Transverse colon (tissue), 4 donors: ENCODE measurements at regions of chr7 and their contacts with region 1.

Region 1: GRCh38 chr7:95963446-95963990 is 191.2 kb downstream of the DYNC1I1 start:
- DNase-seq: no peak
- H3K4me3 ChIP-seq: no peak overlapping the region
- H3K27ac ChIP-seq: no peak overlapping the region
- H3K4me1 ChIP-seq: no peaks in the 10 kb centered on the region
- H3K27me3 ChIP-seq: no peaks in the 10 kb centered on the region
- CTCF ChIP-seq: no peak
- EP300 ChIP-seq: no peak
- POLR2A ChIP-seq: no peak

Region 2: DNA sequence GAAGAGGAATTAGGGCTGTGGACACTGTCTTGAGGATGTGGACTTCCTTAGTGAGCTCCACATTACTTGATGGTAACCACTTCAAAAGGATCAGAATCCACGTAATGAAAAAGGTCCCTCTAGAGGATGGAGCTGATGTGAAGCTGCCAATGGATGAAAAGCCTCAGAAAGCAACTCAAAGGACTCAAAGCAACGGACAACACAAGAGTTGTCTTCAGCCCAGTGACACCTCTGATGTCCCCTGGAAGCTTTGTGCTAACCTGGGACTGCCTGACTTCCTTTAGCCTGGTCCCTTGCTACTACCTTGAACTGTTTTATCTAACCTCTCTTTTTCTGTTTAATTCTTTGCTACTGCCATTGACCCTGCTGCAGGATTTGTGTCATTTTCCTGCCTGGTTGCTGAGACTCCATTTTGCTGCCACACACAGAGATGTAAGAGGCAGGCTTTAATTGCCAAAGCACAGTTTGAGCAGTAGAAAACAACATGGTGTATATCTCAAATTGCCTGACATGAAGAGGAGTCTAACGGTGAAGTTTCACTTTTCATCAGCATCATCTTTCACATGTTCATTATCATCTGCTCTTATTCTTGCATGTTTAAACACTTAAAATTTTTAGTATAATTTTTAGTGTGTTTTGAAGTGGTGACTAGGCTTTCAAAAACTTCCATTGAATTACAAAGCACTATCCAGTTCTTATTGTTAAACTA is 1296.5 kb before region 1 on chr7:
- in situ Hi-C with region 1: no loop called
- intact Hi-C with region 1: loop called (anchors 5 kb)
- DNase-seq: no peak
- H3K4me3 ChIP-seq: no peak overlapping the region
- H3K27ac ChIP-seq: no peak overlapping the region
- H3K4me1 ChIP-seq: no peaks in the 10 kb centered on the region
- H3K27me3 ChIP-seq: no peaks in the 10 kb centered on the region
- CTCF ChIP-seq: no peak
- EP300 ChIP-seq: no peak
- POLR2A ChIP-seq: no peak

Region 3: DNA sequence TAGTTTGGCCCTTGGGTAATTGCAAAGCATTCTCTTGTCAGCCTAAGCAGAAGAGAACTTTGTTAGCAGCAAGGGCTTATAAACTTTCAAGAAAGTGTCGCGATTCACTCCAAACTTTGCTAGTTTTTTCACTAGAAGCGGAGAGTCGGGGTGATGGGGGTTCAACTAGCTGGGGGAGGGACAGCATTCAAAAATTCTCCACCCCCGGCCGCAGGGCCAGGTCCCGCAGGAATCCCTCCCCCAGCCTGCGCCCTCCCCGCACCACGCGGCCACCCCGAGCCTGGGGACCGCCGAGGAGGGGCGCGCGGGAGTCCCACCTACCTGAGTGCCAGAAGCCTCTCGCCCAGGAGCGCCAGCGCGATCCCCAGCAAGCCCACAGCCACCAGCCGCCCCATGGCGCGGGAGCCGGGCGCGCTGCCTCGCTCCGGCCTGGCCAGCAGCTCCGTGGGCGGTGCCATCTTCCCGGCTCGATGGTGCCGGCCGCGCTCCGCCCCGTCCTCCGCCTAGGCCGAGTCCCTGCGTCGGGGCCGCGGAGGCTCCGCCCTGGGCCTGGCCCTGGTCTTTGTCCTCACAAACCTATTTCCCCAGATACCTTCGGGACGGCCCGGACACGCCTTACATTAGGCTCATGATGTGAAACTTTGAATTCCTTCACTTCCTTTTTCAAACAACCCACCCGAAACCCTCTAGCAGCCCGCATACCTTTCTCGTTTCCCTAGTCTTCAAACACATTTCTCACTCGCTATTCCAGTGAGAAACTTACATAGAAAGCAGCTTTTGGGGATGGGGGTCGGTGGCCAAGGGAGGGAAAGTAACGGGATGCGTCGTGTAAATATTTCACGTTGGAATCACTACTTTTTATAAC is 528.7 kb before region 1 on chr7 and contains the start of gene PON2:
- in situ Hi-C with region 1: no loop called
- intact Hi-C with region 1: no loop called
- DNase-seq: peak; percentile 88
- H3K4me3 ChIP-seq: peak within 1 kb of the TSS; percentile 53 to 95 (median 75)
- H3K27ac ChIP-seq: peak within 1 kb of the TSS; percentile 87 to 94 (median 91)
- H3K4me1 ChIP-seq: peaks cover 11 to 39% (median 15%) of the 10 kb centered on the region in 4 donors
- H3K27me3 ChIP-seq: no peaks in the 10 kb centered on the region
- CTCF ChIP-seq: peak in 1 of 5 experiments; percentile 8
- EP300 ChIP-seq: peak; percentile 2
- POLR2A ChIP-seq: peak; percentile 69
- total RNA-seq, gene PON2: 120 to 299 (median 188) TPM